ENCODE measurements at regions of chr6 and their contacts with region 1.

Region 1: DNA sequence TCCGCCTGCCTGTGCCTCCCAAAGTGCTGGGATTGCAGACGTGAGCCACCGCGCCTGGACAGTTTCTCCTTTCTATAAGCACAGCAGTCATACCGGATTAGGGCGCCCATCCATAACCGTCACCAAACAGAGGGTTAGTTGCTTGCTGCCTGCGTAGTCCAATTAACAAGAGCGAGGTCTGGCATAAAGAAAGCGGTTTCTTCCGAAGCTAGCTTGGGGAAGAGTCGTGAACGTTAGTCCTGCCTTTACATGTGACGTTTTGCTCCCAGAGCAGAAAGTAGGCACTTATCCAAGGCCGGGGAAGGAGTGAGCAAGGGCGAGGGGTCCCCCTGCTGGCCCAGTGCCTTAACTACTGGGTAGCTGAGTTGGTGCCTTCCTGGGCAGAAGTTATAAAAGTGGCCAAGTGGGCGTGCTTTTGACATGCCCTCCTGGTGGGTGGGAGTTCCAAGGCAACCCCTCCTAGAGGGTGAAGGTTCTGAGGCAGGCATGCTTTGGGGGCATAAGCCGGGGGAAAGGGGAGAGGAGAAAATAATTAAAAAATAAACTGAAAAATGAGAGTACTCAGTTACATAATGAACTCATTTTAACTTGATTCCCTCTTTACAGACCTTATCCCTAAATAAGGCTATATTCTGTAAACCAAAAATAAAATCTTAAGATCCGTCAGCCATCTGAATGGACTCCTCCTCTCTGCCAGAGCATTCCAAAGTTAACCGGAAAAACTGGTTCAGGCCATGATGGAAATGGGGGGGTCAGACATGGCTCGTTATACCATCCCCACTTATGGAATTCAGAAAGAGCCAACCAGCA is 88.0 kb downstream of the FAM217A start:
- DNase-seq: peak; percentile 74 to 85
- H3K4me3 ChIP-seq: no peak overlapping the region
- H3K4me3 Mint-ChIP-seq: peak overlapping the region; percentile 52
- H3K27ac Mint-ChIP-seq: no peak overlapping the region
- H3K4me1 ChIP-seq: peaks cover 14% of the 10 kb centered on the region
- H3K4me1 Mint-ChIP-seq: peaks cover 11% of the 10 kb centered on the region
- H3K27me3 ChIP-seq: no peaks in the 10 kb centered on the region
- H3K27me3 Mint-ChIP-seq: no peaks in the 10 kb centered on the region
- CTCF ChIP-seq: peak; percentile 89 to 94

Region 2: DNA sequence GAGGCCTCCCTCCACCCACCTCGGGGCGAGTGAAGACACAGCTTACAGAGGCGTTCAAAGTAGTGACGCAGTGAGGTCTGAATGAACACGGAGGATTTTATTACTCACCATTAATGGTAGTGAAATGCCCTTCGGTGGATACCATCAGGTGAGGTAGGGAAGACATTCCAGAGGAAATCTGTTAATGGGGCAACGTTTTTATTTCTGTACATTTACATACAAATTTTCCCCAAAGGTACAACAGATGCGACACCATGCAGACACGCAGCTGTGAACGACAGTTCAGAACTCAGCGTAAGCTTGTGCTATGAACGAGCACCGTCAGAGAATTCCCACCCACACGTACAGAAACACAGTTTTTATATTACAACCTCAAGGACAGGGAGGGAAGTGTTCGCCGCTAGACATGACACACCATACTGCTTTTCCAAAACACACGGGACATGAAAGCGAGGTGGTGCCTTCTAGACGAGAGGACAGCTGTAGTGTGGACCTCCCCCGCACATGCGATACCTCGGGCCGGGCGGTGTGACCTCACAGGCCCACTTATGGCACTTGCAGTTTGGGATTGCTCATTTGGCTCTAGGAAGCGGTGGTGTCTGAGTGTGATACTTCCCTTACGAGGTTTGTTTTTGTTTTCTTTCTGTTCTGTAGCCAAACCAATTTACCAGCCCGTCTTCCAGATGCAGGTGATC is 721.5 kb before region 1 on chr6:
- CTCF ChIA-PET with region 1: no interaction called
- POLR2A ChIA-PET with region 1: no interaction called
- intact Hi-C with region 1: loop called (anchors 5 kb)
- DNase-seq: no peak
- H3K4me3 ChIP-seq: no peak overlapping the region
- H3K4me3 Mint-ChIP-seq: no peak overlapping the region
- H3K27ac Mint-ChIP-seq: peak overlapping the region; percentile 55
- H3K4me1 ChIP-seq: no peaks in the 10 kb centered on the region
- H3K4me1 Mint-ChIP-seq: no peaks in the 10 kb centered on the region
- H3K27me3 ChIP-seq: no peaks in the 10 kb centered on the region
- H3K27me3 Mint-ChIP-seq: no peaks in the 10 kb centered on the region
- CTCF ChIP-seq: no peak

Region 3: GRCh38 chr6:3929281-3929798 is 61.6 kb before region 1 on chr6:
- CTCF ChIA-PET with region 1: interaction called, 5 read pairs
- POLR2A ChIA-PET with region 1: no interaction called
- intact Hi-C with region 1: loop called (anchors 1 kb)
- DNase-seq: no peak
- H3K4me3 ChIP-seq: no peak overlapping the region
- H3K4me3 Mint-ChIP-seq: no peak overlapping the region
- H3K27ac Mint-ChIP-seq: no peak overlapping the region
- H3K4me1 ChIP-seq: no peaks in the 10 kb centered on the region
- H3K4me1 Mint-ChIP-seq: no peaks in the 10 kb centered on the region
- H3K27me3 ChIP-seq: no peaks in the 10 kb centered on the region
- H3K27me3 Mint-ChIP-seq: no peaks in the 10 kb centered on the region
- CTCF ChIP-seq: no peak

Region 4: GRCh38 chr6:4008324-4009047 is 17.6 kb after region 1 on chr6:
- CTCF ChIA-PET with region 1: interaction called, 3 read pairs
- POLR2A ChIA-PET with region 1: no interaction called
- intact Hi-C with region 1: loop called (anchors 1 kb)
- DNase-seq: peak in 1 of 2 experiments; percentile 68
- H3K4me3 ChIP-seq: no peak overlapping the region
- H3K4me3 Mint-ChIP-seq: no peak overlapping the region
- H3K27ac Mint-ChIP-seq: no peak overlapping the region
- H3K4me1 ChIP-seq: peaks cover 7% of the 10 kb centered on the region; the same call in 1 of the 2 replicates
- H3K4me1 Mint-ChIP-seq: peaks cover 6% of the 10 kb centered on the region
- H3K27me3 ChIP-seq: no peaks in the 10 kb centered on the region
- H3K27me3 Mint-ChIP-seq: no peaks in the 10 kb centered on the region
- CTCF ChIP-seq: peak; percentile 48 to 52